HepG2 (cell line): ENCODE measurements at regions of chr18 and their contacts with region 1.

Region 1: DNA sequence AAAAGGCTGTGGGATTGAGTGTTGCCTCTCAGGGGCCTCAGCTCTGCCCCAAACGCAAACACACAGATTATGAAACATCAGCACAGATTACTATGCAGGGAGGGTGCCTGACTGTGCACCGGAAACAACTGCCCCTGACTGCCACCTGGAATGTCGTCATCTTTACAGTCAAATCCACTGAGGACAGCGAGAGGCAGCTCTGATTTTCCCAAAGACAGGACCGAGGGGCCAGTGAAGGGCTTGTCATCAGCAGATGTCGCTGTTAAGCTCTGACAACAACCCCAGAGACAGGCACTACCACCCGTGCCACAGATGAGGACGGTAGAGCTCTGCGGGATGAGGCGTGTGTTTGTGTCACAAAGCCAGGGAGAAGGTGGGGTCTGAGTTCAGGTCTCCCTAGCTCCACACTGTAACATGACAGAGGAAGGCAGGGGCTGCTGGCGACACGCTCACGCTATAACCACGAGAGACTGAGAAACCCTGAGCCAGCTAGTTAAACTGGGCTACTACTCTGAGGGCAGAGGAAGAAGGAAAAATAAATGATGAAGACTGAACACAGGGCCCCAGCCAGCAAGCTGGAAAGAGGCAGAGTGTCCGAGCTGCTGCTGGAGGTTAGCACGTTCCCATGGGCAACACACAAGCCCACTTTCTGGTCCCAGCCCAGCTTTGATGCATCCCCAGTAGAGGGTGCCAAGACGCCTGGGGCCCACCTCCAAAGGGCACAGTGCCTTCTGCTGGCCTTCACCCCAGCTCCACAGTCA is 47.0 kb downstream of the PARD6G start:
- DNase-seq: peak; percentile 80
- ATAC-seq: peak; percentile 96
- H3K4me3 ChIP-seq: no peak overlapping the region
- H3K27ac ChIP-seq: no peak overlapping the region
- H3K4me1 ChIP-seq: peaks cover 15% of the 10 kb centered on the region
- H3K27me3 ChIP-seq: no peaks in the 10 kb centered on the region
- CTCF ChIP-seq: peak; percentile 89
- EP300 ChIP-seq: peak in 1 of 2 experiments; percentile 27; a peak in 1 of 4 replicates
- POLR2A ChIP-seq: no peak
- RAD21 ChIP-seq: peak; percentile 77

Region 2: GRCh38 chr18:80157708-80158343 is 42.5 kb before region 1 on chr18:
- CTCF ChIA-PET with region 1: interaction called, 3 read pairs
- POLR2A ChIA-PET with region 1: no interaction called
- in situ Hi-C with region 1: no loop called
- intact Hi-C with region 1: loop called (anchors 1 kb)
- DNase-seq: peak; percentile 57
- ATAC-seq: peak; percentile 61
- H3K4me3 ChIP-seq: no peak overlapping the region
- H3K27ac ChIP-seq: no peak overlapping the region
- H3K4me1 ChIP-seq: no peaks in the 10 kb centered on the region
- H3K27me3 ChIP-seq: no peaks in the 10 kb centered on the region
- CTCF ChIP-seq: peak; percentile 86
- EP300 ChIP-seq: no peak
- POLR2A ChIP-seq: no peak
- RAD21 ChIP-seq: peak; percentile 49

Region 3: GRCh38 chr18:80247403-80247916 is 47.1 kb after region 1 on chr18 and contains the start of gene PARD6G:
- CTCF ChIA-PET with region 1: no interaction called
- POLR2A ChIA-PET with region 1: interaction called, 4 read pairs
- in situ Hi-C with region 1: no loop called
- intact Hi-C with region 1: loop called (anchors 1 kb)
- DNase-seq: peak; percentile 26
- ATAC-seq: peak; percentile 63
- H3K4me3 ChIP-seq: peak within 1 kb of the TSS; percentile 67 to 87 (median 86); a peak in 5 of 6 replicates
- H3K27ac ChIP-seq: peak within 1 kb of the TSS; percentile 59
- H3K4me1 ChIP-seq: peaks cover 24% of the 10 kb centered on the region
- H3K27me3 ChIP-seq: peaks cover 2 to 6% of the 10 kb centered on the region in 2 experiments; a peak in 1 of 5 replicates
- CTCF ChIP-seq: peak; percentile 48
- EP300 ChIP-seq: no peak
- POLR2A ChIP-seq: no peak
- RAD21 ChIP-seq: no peak
- total RNA-seq, gene PARD6G: 7.2 and 7.4 TPM in 2 replicates

Region 4: DNA sequence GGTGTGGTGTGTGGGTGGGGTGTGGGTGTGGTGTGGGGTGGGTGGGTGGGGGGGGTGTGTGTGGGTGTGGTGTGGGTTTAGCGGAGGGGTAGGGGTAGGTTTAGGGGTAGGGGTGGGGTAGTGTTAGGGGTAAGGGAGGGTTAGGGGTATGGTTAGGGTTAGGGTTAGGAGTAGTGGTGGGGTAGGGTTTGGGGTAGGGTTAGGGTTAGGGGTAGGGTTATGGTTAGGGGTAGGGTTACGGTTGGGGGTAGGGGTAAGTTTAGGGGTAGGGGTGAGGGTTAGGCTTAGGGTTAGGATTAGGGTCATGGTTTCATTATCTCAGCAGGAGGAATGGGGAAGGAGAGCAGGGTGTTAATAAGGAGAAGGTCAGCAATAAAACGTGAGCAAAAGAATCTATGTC is 58.3 kb after region 1 on chr18:
- CTCF ChIA-PET with region 1: interaction called, 19 read pairs
- POLR2A ChIA-PET with region 1: interaction called, 4 read pairs
- in situ Hi-C with region 1: no loop called
- intact Hi-C with region 1: no loop called
- DNase-seq: no peak
- ATAC-seq: no peak
- H3K4me3 ChIP-seq: no peak overlapping the region
- H3K27ac ChIP-seq: no peak overlapping the region
- H3K4me1 ChIP-seq: no peaks in the 10 kb centered on the region
- H3K27me3 ChIP-seq: no peaks in the 10 kb centered on the region; a peak in 2 of 5 replicates
- CTCF ChIP-seq: no peak
- EP300 ChIP-seq: no peak
- POLR2A ChIP-seq: no peak
- RAD21 ChIP-seq: no peak